ENCODE measurements at regions of chrX and their contacts with region 1.

Region 1: DNA sequence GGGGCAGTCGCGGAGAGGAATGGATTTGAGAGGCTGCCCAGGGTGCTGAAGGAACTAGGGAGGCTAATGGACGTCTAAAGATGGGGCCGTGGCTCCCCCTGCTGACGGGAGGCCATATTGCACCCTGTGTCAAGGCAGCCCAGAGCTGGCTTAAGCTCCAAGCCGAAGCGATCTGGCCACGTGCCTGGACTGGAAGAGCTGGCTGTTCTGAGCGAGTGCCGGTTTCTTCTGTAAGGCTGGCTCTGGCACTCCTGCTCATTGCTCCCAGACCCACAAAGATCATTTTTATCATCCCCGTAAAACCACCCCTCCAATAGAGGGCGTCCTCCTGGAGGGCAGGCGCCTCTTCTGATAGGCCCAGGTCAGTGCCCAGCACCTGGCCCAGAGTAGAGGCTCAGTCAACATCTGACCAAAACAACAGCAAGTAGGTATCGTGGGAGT is 5.6 kb downstream of the PNCK start:
- DNase-seq: peak; percentile 72 to 89
- H3K4me3 ChIP-seq: no peak overlapping the region
- H3K27ac ChIP-seq: peak overlapping the region in 1 of 2 donors; percentile 35
- H3K4me1 ChIP-seq: peaks cover 0 to 3% (median under 1%) of the 10 kb centered on the region in 4 donors
- H3K27me3 ChIP-seq: peaks cover 0 to 9% of the 10 kb centered on the region in 2 donors
- CTCF ChIP-seq: peak; percentile 63 to 65

Region 2: GRCh38 chrX:153539171-153539978 is 128.6 kb before region 1 on chrX:
- intact Hi-C with region 1: loop called (anchors 5 kb)
- DNase-seq: peak; percentile 32 to 70
- H3K4me3 ChIP-seq: no peak overlapping the region
- H3K27ac ChIP-seq: no peak overlapping the region
- H3K4me1 ChIP-seq: no peaks in the 10 kb centered on the region
- H3K27me3 ChIP-seq: peaks cover 0 to 11% of the 10 kb centered on the region in 2 donors
- CTCF ChIP-seq: peak; percentile 67 to 70

Region 3: DNA sequence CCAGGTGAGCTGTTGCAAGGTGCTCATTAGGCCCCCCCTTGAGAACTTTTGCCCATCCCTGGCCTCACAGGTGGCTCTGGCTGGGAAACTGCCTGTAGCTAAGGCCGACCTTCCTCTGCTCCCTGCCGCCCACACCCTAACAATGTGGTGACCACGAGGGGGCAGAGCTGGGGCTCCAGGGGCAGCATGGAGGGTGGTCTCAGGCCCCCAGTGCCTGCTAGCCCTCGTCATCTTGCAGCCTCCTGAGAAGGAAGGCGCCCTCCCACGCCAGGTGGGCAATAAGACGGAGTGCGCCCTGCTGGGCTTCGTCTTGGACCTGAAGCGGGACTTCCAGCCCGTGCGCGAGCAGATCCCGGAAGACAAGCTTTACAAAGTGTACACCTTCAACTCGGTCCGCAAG is 118.2 kb before region 1 on chrX:
- intact Hi-C with region 1: loop called (anchors 5 kb)
- DNase-seq: no peak
- H3K4me3 ChIP-seq: no peak overlapping the region
- H3K27ac ChIP-seq: no peak overlapping the region
- H3K4me1 ChIP-seq: no peaks in the 10 kb centered on the region
- H3K27me3 ChIP-seq: no peaks in the 10 kb centered on the region
- CTCF ChIP-seq: no peak

Region 4: DNA sequence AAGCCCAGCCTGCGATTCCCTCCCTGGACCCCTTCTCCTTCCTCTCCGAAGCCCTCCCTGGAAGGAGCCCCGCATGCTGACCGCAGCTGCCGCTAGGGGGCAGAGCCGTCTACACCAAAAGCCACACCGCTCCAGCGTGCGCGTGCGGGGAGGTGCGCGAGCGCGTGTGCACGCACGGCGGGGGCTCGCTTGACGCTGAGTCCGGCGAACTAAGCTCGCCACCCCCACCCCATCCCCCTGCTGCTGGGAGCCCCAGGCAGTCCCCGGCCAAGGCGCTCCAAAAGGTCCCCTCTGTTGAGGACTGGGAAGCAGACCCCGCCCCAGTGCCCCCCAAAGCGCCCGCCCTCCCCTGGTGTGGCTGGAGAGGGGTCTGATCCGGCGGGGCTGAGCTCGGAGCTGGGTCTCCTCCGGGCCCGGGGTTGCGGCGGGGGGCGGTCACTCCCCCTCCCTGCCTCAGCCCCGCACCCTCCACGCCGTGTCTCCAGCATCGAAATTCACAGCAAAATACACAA is 58.0 kb before region 1 on chrX:
- intact Hi-C with region 1: loop called (anchors 5 kb)
- DNase-seq: peak; percentile 41 to 77
- H3K4me3 ChIP-seq: peak overlapping the region; percentile 42 to 55
- H3K27ac ChIP-seq: peak overlapping the region in 1 of 2 donors; percentile 25
- H3K4me1 ChIP-seq: peaks cover 0 to 17% (median 12%) of the 10 kb centered on the region in 4 donors
- H3K27me3 ChIP-seq: no peaks in the 10 kb centered on the region
- CTCF ChIP-seq: peak; percentile 62 to 73